Mammary epithelial cell (primary cell): ENCODE measurements at regions of chr16 and their contacts with region 1.

Region 1: DNA sequence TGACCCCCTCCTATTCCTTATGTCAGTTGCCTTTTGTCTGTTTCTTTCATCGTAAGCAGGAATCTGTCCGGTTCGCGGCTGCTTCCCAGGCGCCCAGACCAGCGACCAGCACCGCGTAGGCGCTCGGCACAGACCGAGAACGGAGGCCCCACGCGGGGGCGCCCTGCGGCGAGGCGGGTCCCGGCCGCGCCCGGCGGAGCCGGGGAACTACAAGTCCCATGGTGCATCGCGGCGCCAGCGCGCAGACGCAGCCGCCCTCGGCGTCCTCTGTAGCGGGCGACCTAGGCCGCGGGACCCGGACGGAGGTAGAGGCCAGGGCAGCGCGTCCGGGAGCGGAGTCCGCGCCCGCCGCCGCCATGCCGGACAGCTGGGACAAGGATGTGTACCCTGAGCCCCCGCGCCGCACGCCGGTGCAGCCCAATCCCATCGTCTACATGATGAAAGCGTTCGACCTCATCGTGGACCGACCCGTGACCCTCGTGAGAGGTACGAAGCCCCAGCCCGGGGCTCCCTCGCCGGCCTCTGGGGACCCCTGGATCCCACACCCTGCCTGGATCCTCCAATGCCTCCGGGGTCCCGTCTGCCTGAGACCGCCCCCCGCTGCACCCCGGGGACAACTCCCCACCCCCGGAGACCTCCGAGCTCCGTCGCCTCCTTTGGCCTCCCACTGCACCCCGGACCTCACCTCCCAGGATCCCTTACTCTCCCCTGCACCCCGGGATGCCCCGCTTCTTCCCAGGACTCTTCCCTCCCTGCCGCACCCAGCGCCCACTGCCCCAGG is at the start of gene NDUFB10:
- DNase-seq: peak; percentile 84
- H3K4me3 ChIP-seq: peak within 1 kb of the TSS; percentile 81 to 91 (median 82)
- H3K27ac ChIP-seq: peak within 1 kb of the TSS; percentile 46
- H3K4me1 ChIP-seq: peaks cover 14% of the 10 kb centered on the region
- H3K27me3 ChIP-seq: no peaks in the 10 kb centered on the region
- CTCF ChIP-seq: peak; percentile 34 to 61
- total RNA-seq, gene NDUFB10: 62.5 to 146 TPM

Region 2: GRCh38 chr16:1890708-1891050 is 68.8 kb before region 1 on chr16:
- CTCF ChIA-PET with region 1: interaction called, 4 read pairs
- dilution Hi-C with region 1: loop called (anchors 5 kb)
- in situ Hi-C with region 1: no loop called
- intact Hi-C with region 1: no loop called
- DNase-seq: no peak
- H3K4me3 ChIP-seq: no peak overlapping the region
- H3K27ac ChIP-seq: no peak overlapping the region
- H3K4me1 ChIP-seq: no peaks in the 10 kb centered on the region
- H3K27me3 ChIP-seq: no peaks in the 10 kb centered on the region
- CTCF ChIP-seq: no peak

Region 3: GRCh38 chr16:2003827-2004641 is 44.6 kb after region 1 on chr16:
- CTCF ChIA-PET with region 1: no interaction called
- dilution Hi-C with region 1: loop called (anchors 5 kb)
- in situ Hi-C with region 1: no loop called
- intact Hi-C with region 1: loop called (anchors 2 kb)
- DNase-seq: peak; percentile 66
- H3K4me3 ChIP-seq: no peak overlapping the region
- H3K27ac ChIP-seq: no peak overlapping the region
- H3K4me1 ChIP-seq: peaks cover 38% of the 10 kb centered on the region
- H3K27me3 ChIP-seq: no peaks in the 10 kb centered on the region
- CTCF ChIP-seq: peak; percentile 73 to 88